ENCODE measurements at regions of chr10 and their contacts with region 1.

Region 1: GRCh38 chr10:91632671-91633550 is at the start of gene PPP1R3C:
- DNase-seq: peak; percentile 82
- H3K4me3 ChIP-seq: peak within 1 kb of the TSS; percentile 85
- H3K27ac ChIP-seq: peak within 1 kb of the TSS; percentile 60
- H3K27me3 ChIP-seq: no peaks in the 10 kb centered on the region
- CTCF ChIP-seq: peak; percentile 49
- polyA plus RNA-seq, gene PPP1R3C: 42.2 and 51.1 TPM in 2 replicates

Region 2: DNA sequence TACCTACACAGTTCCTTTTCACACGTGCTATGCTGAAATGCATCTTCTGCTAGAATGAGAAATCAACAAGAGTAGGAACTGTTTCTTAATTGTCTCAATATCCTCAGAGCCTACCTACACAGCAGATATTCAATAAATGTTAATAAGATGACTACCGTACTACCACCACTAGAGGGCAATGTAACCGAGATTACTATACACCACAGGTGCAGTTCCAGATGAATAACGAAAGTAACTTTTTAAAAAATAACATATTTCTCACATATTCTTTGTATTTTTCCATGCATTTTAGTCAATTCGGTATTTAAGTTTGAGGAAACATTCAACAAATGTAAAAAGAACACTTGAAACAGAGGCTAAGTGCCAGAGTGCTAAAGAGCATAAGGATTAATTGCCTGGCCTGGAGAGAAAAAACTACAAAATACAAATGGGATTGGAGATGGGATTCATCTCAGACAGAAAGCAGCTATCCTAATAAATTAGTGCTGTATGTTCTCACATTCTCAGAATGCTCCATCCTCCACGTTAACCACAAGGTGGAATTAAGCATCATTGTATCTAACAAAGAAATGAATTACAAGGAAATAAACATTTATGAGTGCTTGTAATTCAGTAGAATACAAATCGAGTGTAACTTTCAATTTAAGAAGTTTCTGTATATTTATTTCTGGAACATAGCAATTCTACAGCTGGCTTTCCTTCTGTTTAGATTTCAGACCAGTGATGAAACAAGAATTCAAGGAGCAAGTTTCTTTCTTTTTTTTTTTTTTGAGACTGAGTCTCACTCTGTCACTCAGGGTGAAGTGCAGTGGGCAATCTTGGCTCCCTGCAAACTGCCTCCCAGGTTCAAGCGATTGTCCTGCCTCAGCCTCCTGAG is 243.0 kb before region 1 on chr10:
- CTCF ChIA-PET with region 1: interaction called, 20 read pairs
- POLR2A ChIA-PET with region 1: no interaction called
- DNase-seq: no peak
- H3K4me3 ChIP-seq: peak overlapping the region; percentile 17
- H3K27ac ChIP-seq: no peak overlapping the region
- H3K27me3 ChIP-seq: peaks cover 30% of the 10 kb centered on the region
- CTCF ChIP-seq: peak; percentile 58

Region 3: GRCh38 chr10:91493313-91493712 is 139.6 kb before region 1 on chr10:
- CTCF ChIA-PET with region 1: interaction called, 105 read pairs
- POLR2A ChIA-PET with region 1: interaction called, 6 read pairs
- DNase-seq: no peak
- H3K4me3 ChIP-seq: no peak overlapping the region
- H3K27ac ChIP-seq: no peak overlapping the region
- H3K27me3 ChIP-seq: no peaks in the 10 kb centered on the region
- CTCF ChIP-seq: peak; percentile 38

Region 4: DNA sequence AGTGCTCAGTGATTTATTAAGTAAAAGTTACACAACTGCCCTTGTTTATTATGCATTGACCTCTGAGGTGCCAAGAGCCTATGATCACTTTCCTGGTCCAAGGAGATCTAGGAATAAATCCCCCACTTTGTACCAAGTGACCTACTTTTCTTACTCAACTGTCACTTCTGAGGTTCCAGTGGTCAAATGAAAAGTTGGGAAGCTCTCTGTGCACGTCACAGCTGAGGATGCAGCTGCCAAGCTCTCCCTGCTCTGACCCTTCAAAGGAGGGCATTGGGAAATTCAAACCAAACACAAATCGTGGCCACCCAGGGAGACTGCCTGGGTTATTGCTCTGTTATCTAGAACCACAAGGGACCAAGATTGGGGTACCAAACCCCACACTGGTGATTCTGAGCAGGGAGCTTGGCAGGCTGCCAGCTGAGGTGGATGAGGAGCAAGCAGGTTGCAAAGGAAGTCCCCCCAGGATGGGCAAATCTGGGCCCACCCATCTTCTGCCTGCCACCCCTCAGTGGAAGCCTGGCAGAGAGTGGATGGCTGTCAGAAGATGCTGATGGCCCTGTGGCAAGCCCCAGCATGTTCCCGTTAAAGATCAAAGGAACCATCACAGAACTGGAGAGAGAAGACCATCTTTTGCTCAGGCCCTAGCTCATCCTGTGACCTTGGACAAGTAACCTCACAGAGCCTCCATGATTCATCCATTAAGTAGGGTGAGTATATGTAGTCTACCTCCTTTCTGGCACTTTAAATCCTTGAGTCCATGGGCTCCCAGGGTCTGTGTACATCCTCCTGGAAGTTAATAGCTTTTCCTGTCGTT is 106.8 kb before region 1 on chr10:
- CTCF ChIA-PET with region 1: no interaction called
- POLR2A ChIA-PET with region 1: no interaction called
- DNase-seq: no peak
- H3K4me3 ChIP-seq: no peak overlapping the region
- H3K27ac ChIP-seq: no peak overlapping the region
- H3K27me3 ChIP-seq: peaks cover 2% of the 10 kb centered on the region
- CTCF ChIP-seq: no peak

Region 5: DNA sequence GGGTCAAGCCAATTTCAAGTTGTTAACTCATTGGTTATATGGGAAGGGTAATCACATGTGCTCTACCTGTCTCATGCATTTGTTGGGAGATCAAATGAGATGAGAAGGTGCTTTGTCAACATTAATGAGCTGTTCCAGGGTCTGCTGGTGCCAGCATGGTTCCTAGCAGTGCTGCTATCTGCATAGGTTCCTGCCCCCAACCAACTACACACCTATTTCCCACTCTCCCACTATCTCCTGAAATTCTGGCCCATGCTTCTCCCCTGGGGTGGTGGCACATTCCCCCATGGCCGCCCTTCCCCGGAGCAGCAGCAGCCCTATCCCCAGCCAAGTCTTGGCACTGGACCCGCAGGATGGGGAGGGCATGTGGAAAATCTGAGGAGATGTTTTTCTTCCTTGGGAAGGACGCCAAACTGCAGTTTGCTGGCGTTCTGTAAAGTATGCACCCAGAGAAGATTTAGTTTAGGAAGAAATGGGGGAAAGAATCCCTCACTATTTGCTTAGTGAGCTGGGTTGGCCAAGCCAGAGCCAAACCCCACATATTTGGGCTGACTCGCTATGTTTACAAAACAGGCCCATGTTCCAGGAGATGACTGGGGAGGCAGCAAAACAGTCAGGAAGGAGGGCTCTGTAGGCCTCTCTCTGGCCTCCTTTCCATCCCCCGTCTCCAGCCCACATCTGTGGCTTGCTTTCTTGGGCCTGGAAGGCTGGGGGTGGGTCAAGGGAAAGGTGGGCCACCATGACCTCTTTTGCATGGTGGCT is 42.6 kb before region 1 on chr10:
- CTCF ChIA-PET with region 1: interaction called, 24 read pairs
- POLR2A ChIA-PET with region 1: interaction called, 23 read pairs
- DNase-seq: peak; percentile 84
- H3K4me3 ChIP-seq: no peak overlapping the region
- H3K27ac ChIP-seq: peak overlapping the region; percentile 98
- H3K27me3 ChIP-seq: no peaks in the 10 kb centered on the region
- CTCF ChIP-seq: no peak

Region 6: GRCh38 chr10:91643700-91644099 is 10.8 kb after region 1 on chr10:
- CTCF ChIA-PET with region 1: interaction called, 35 read pairs
- POLR2A ChIA-PET with region 1: interaction called, 5 read pairs
- DNase-seq: no peak
- H3K4me3 ChIP-seq: no peak overlapping the region
- H3K27ac ChIP-seq: no peak overlapping the region
- H3K27me3 ChIP-seq: no peaks in the 10 kb centered on the region
- CTCF ChIP-seq: peak; percentile 39

Region 7: GRCh38 chr10:91672021-91672608 is 39.2 kb after region 1 on chr10:
- CTCF ChIA-PET with region 1: interaction called, 16 read pairs
- POLR2A ChIA-PET with region 1: interaction called, 3 read pairs
- DNase-seq: peak; percentile 37
- H3K4me3 ChIP-seq: no peak overlapping the region
- H3K27ac ChIP-seq: no peak overlapping the region
- H3K27me3 ChIP-seq: no peaks in the 10 kb centered on the region
- CTCF ChIP-seq: no peak

Region 8: GRCh38 chr10:91875779-91876178 is 242.9 kb after region 1 on chr10:
- CTCF ChIA-PET with region 1: no interaction called
- POLR2A ChIA-PET with region 1: no interaction called
- DNase-seq: no peak
- H3K4me3 ChIP-seq: no peak overlapping the region
- H3K27ac ChIP-seq: no peak overlapping the region
- H3K27me3 ChIP-seq: no peaks in the 10 kb centered on the region
- CTCF ChIP-seq: no peak

Region 9: DNA sequence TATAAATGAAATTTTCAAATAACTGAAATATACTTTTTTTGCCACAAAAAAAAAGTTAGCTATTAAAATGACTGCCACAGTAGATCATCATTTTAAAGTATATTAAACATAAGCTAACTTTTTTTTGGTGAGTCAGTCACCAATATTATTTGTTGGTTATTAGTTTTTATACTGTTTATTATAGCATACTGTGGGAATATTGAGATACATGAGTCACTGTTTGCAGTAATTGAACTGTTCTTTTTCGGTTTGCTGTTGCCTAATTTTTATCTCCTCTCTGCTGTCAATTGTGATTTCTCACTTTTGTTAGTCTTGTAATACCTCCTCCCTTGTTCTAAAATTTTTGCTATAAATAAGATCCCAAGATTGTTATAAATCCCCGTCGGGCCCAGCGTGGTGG is 336.4 kb after region 1 on chr10:
- CTCF ChIA-PET with region 1: no interaction called
- POLR2A ChIA-PET with region 1: no interaction called
- DNase-seq: no peak
- H3K4me3 ChIP-seq: no peak overlapping the region
- H3K27ac ChIP-seq: no peak overlapping the region
- H3K27me3 ChIP-seq: no peaks in the 10 kb centered on the region
- CTCF ChIP-seq: no peak